MCF 10A (cell line): ENCODE measurements at regions of chr9 and their contacts with region 1.

Region 1: GRCh38 chr9:71683598-71684235 is 84.6 kb downstream of the CEMIP2 start:
- DNase-seq: peak; percentile 88
- H3K4me3 Mint-ChIP-seq: peak overlapping the region; percentile 15
- H3K27ac Mint-ChIP-seq: no peak overlapping the region
- H3K4me1 Mint-ChIP-seq: peaks cover 35% of the 10 kb centered on the region
- H3K27me3 Mint-ChIP-seq: no peaks in the 10 kb centered on the region
- CTCF ChIP-seq: peak; percentile 62

Region 2: DNA sequence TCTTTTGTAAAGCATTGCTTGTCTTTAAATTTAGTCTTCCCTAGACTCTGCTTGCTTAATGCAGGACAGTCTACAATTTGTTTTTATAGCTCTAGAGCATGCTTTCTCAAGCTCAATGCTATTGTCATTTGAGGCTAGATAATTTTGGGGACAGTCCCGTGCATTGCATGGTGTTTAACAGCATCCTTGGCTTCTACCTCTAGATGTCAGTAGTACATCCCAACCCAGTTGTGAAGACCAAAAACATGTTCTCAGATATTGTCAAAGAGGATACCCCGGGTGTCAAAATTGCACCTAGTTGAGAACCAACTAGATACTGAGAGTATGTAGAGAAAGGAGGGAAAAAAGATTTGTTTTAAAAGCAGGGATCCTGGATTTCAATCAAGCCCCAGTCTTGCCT is 192.9 kb before region 1 on chr9:
- CTCF ChIA-PET with region 1: interaction called, 15 read pairs
- POLR2A ChIA-PET with region 1: no interaction called
- intact Hi-C with region 1: no loop called
- DNase-seq: peak; percentile 33
- H3K4me3 Mint-ChIP-seq: no peak overlapping the region
- H3K27ac Mint-ChIP-seq: no peak overlapping the region
- H3K4me1 Mint-ChIP-seq: peaks cover 3% of the 10 kb centered on the region
- H3K27me3 Mint-ChIP-seq: no peaks in the 10 kb centered on the region
- CTCF ChIP-seq: peak; percentile 50

Region 3: DNA sequence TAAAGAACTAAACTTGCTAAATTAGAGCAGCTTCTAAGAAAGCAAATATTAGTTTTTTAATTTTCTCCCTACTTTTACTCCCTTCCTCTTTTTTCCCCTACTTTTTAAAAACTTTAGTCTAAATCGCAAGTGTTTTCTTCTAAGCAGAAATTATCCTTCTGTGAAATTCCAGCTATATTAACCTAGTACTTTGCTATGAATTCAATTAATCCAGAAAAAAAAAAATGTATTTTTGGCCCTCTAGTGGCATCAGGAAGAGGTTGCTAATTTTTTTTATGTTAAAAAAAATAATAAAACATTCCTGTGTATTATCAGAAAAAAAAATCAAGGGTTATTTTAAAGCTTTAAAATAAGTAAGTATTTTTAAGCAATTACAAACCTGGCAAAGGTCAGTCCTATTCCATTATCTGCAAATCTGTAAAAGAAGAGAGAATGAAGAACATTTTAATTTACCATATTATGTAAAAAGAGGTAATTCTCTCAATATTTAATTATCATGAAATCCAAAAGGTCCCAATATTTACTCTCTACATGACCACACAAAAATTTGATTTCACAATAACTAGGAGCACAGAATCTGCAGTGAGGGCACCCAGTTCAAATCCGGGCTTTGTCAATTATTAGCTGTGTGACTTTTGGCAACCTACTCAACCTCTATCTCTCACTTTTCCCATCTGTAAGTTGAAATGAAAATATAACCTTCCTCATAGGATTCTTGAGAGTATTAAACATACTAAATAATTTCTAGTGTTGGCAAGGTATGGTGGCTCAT is 32.6 kb after region 1 on chr9:
- CTCF ChIA-PET with region 1: interaction called, 162 read pairs
- POLR2A ChIA-PET with region 1: interaction called, 6 read pairs
- intact Hi-C with region 1: loop called (anchors 5 kb)
- DNase-seq: no peak
- H3K4me3 Mint-ChIP-seq: no peak overlapping the region
- H3K27ac Mint-ChIP-seq: peak overlapping the region; percentile 54
- H3K4me1 Mint-ChIP-seq: peaks cover 19% of the 10 kb centered on the region
- H3K27me3 Mint-ChIP-seq: no peaks in the 10 kb centered on the region
- CTCF ChIP-seq: peak; percentile 42

Region 4: GRCh38 chr9:71762900-71763653 is 79.4 kb after region 1 on chr9:
- CTCF ChIA-PET with region 1: interaction called, 91 read pairs
- POLR2A ChIA-PET with region 1: interaction called, 75 read pairs
- intact Hi-C with region 1: no loop called
- DNase-seq: peak; percentile 24
- H3K4me3 Mint-ChIP-seq: no peak overlapping the region
- H3K27ac Mint-ChIP-seq: no peak overlapping the region
- H3K4me1 Mint-ChIP-seq: peaks cover 51% of the 10 kb centered on the region
- H3K27me3 Mint-ChIP-seq: no peaks in the 10 kb centered on the region
- CTCF ChIP-seq: no peak

Region 5: GRCh38 chr9:71819115-71819739 is 135.5 kb after region 1 on chr9:
- CTCF ChIA-PET with region 1: interaction called, 53 read pairs
- POLR2A ChIA-PET with region 1: no interaction called
- intact Hi-C with region 1: no loop called
- DNase-seq: peak; percentile 56
- H3K4me3 Mint-ChIP-seq: no peak overlapping the region
- H3K27ac Mint-ChIP-seq: no peak overlapping the region
- H3K4me1 Mint-ChIP-seq: no peaks in the 10 kb centered on the region
- H3K27me3 Mint-ChIP-seq: no peaks in the 10 kb centered on the region
- CTCF ChIP-seq: peak; percentile 62